ENCODE measurements at regions of chr11 and their contacts with region 1.

Region 1: DNA sequence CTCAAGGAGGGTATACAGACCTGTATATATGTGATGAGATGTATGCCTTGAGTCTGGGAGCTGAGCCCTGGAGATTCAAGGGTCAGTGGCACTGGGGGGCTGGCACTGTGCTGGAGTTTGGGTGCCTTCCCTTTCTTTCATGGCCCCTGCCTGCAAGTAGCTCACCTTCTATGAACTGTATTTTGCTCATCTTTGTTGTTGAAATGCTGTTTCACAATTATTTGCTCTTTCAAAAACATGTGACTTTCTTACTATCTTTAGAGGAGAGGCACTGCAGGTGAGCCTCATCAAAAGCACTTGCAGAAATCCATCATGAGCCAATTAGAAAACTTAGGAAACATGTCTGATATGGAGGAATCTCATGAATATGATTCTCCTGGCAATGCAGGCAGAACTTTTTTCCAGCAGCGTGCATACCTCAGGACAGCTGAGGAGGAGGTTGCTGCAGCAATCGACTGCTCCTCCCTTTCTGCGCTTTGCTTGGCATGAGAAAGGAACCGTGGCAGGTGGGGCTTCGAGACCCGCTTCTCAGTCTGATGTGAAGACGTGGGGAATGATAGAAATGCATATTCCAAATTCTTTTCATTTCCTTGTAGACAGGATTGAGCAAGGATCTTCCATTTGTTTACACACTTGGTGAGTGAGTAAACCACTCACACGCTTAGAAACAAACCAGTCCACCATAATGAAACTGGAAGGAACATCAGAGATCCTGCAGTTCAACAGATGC is 178.4 kb upstream of the E2F8 start:
- DNase-seq: no peak
- ATAC-seq: no peak
- H3K4me3 ChIP-seq: no peak overlapping the region
- H3K27ac ChIP-seq: no peak overlapping the region
- H3K4me1 ChIP-seq: no peaks in the 10 kb centered on the region
- H3K27me3 ChIP-seq: no peaks in the 10 kb centered on the region
- CTCF ChIP-seq: no peak
- POLR2A ChIP-seq: no peak

Region 2: DNA sequence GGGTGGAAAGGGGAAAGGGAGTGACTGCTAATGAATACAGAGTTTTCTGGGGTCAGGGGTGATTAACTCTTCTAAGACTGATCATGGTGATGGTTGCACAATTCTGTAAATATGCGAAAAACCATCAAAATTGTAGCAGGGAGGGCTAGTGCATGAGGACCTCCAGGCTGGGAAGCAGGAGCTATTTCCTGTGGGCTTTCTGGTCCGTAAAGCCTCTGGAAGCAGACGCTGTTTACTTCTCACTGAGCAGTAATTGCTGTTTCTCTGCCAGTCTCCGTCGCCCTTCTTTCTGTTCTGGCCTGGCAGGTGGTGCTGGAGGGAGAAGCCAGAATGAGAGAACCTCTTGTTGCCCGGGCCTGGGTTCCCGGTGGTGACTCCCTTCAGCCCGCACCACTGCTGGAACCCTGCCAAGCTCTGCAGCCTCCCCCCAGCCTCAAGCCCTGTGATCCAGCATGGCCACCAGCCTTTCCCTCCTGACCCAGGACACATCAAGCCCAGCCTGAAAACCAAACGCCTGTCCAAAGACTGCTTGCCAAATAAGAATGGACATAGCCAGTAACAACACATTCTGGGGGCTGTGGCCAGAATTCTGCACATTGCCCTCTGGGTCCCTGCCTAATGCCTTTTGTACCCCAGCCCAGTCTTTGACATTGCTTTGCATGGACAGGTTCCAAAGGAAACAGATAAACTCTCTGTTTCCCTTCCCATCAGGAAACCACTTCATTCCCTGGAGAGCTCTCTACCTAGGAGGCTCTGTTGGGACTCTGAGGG is 92.4 kb after region 1 on chr11:
- in situ Hi-C with region 1: no loop called
- intact Hi-C with region 1: no loop called
- DNase-seq: no peak
- ATAC-seq: peak in 1 of 2 donors; percentile 26
- H3K4me3 ChIP-seq: no peak overlapping the region
- H3K27ac ChIP-seq: no peak overlapping the region
- H3K4me1 ChIP-seq: peaks cover 5 to 12% of the 10 kb centered on the region in 2 donors
- H3K27me3 ChIP-seq: peaks cover 0 to 3% (median 2%) of the 10 kb centered on the region in 3 donors
- CTCF ChIP-seq: no peak
- POLR2A ChIP-seq: no peak

Region 3: GRCh38 chr11:19525276-19526113 is 106.3 kb after region 1 on chr11:
- in situ Hi-C with region 1: loop called in 1 of 4 experiments (anchors 25 kb)
- intact Hi-C with region 1: no loop called
- DNase-seq: no peak
- ATAC-seq: no peak
- H3K4me3 ChIP-seq: no peak overlapping the region
- H3K27ac ChIP-seq: no peak overlapping the region
- H3K4me1 ChIP-seq: no peaks in the 10 kb centered on the region
- H3K27me3 ChIP-seq: no peaks in the 10 kb centered on the region
- CTCF ChIP-seq: no peak
- POLR2A ChIP-seq: no peak

Region 4: DNA sequence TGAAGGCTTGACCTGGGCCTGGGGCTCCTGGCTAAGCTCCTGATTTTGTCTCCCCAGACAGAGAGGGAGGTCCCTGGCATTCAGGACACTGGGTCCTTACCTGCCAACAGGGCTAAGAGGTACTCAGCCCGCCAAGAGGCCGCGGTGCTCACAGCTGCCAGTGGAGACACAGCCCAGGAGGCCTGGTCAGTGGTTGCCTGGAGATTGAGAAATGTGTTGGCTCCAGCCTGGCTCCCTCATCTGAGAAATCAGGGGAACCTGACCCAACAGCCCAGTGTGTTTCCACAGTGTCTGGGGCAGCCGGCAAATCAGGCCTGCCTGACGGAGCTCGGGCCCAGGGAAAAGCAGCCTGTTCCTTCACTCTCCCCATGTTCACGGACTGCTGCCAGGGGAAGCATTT is 214.1 kb after region 1 on chr11:
- in situ Hi-C with region 1: no loop called
- intact Hi-C with region 1: no loop called
- DNase-seq: peak; percentile 62 to 81
- ATAC-seq: peak; percentile 84 to 91
- H3K4me3 ChIP-seq: no peak overlapping the region
- H3K27ac ChIP-seq: peak overlapping the region; percentile 12 to 54 (median 46)
- H3K4me1 ChIP-seq: peaks cover 4 to 16% of the 10 kb centered on the region in 2 donors
- H3K27me3 ChIP-seq: no peaks in the 10 kb centered on the region
- CTCF ChIP-seq: no peak
- POLR2A ChIP-seq: no peak

Measured in gastrocnemius medialis (tissue), 4 donors.